HepG2 (cell line): ENCODE measurements at regions of chr15 and their contacts with region 1.

Region 1: DNA sequence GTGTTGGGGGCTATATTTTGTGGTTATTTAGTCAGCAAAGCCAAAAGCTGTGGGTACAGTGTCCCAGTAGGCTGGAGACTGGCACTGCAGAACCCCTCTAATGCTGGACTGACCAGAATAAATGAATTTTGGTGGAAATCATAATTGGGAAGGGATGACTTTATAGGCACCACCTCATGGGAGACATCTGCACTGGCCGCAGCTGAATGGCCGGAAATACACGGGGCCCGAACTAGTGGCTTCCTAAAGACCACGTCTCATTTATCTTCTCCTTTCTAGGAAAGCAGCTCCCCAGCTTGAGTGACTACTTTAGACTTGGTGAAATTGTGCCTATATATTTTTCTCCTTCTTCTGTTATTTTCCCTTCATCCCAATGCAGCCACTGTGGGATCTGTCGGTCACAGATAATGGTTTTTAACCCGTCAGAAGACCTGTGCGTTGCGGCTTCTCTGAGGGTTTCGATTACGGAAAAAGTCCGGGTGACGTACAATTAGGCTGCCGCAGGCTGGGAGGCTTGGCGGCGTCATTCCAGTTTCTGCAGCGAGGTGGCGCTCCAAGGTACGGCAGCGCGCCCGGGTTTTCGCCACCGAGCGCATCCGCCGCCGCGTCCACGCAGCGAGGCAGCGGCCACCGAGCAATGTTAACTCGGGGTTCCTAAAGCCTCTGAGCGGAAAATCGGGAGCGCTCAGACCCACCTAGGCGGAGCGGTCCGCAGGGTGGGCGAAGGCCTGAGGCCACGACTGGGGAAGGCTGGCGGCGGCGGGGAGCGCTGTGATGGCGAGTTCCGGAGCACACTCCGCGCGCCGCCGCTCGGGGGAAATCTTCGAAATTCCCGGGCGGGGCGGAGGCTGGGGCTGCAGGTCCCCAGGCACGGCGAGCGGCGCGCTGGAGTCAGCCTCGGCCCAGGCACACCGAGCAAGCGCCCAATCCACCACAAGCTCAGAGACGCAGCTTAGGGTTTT is 26.3 kb downstream of the NR2F2 start:
- DNase-seq: peak; percentile 54
- ATAC-seq: peak; percentile 78
- H3K4me3 ChIP-seq: peak overlapping the region; percentile 63 to 80 (median 70)
- H3K27ac ChIP-seq: no peak overlapping the region
- H3K4me1 ChIP-seq: peaks cover 26% of the 10 kb centered on the region
- H3K27me3 ChIP-seq: no peaks in the 10 kb centered on the region; a peak in 1 of 5 replicates
- CTCF ChIP-seq: peak; percentile 96
- EP300 ChIP-seq: no peak
- POLR2A ChIP-seq: no peak
- RAD21 ChIP-seq: peak; percentile 92

Region 2: DNA sequence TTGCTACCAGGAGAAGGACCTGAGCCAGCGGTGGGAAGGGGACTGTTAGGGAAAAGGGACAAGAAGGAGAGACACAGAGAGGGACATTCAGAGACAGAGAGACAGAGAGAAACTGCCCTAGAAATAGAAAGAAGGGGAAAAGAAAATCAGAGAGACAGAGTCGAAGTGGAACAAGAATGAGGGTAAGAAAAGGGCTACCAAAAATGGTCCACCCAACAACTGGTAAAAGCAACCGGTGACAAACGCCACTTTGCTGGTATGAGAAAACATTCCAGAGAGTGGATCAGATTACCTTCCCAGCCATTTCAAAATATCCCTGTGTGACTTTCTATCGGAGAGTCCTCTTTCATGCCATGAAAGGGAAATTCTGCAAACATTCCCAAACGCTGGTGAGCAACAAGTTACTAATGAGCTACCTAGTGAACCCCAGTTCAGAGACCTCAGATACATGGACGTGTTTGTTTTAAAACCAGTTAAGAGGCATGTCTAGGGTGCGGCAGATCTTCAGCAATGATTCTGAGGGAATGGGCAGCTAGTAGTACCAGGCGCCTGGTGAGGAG is 444.6 kb before region 1 on chr15:
- CTCF ChIA-PET with region 1: no interaction called
- POLR2A ChIA-PET with region 1: no interaction called
- in situ Hi-C with region 1: no loop called
- intact Hi-C with region 1: loop called (anchors 10 kb)
- DNase-seq: peak; percentile 66
- ATAC-seq: peak; percentile 87
- H3K4me3 ChIP-seq: no peak overlapping the region
- H3K27ac ChIP-seq: no peak overlapping the region
- H3K4me1 ChIP-seq: peaks cover 13% of the 10 kb centered on the region
- H3K27me3 ChIP-seq: no peaks in the 10 kb centered on the region
- CTCF ChIP-seq: no peak
- EP300 ChIP-seq: no peak
- POLR2A ChIP-seq: no peak
- RAD21 ChIP-seq: no peak

Region 3: DNA sequence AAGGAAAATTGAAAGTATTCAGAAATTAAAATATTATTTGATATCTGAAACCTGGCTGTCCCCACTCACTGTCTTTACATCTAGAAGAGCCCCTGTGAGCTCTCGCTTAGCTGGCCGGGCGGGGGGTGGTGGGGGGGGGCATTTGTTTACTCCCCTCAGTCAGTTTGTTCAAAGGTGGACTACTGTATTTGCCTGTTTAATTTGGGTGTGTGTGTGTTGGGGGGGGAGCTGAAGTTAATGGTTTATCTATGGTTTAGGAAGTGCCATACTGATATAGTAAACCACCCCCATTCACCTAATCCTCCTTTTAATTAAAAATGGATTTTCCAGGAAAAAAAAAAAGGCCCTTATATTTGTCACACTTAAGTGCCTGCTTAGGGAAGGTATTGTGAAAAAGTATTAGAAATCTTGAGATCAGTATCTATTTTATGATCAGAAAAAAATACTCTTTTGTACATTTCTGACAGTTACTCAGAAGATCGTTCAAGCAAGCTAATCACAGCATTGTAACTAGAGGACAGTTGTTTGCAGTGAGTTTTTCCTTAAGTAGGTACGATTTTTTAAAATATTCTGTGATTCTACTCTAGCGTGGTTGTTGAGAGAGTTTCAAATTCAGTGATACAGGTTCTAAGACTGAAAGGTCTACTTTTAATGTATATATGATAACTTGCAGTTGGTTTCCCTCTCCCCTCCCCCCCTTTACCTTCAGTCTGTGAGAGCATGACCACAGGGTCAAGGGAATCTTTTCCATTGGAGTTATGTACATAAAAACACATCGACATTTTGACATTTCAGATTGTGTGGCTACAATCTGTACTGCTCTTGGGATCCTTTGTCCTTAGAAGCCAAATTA is 17.8 kb before region 1 on chr15:
- CTCF ChIA-PET with region 1: no interaction called
- POLR2A ChIA-PET with region 1: interaction called, 8 read pairs
- in situ Hi-C with region 1: no loop called
- intact Hi-C with region 1: loop called (anchors 2 kb)
- DNase-seq: peak; percentile 89
- ATAC-seq: peak; percentile 65
- H3K4me3 ChIP-seq: peak overlapping the region; percentile 27 to 94 (median 82); a peak in 5 of 6 replicates
- H3K27ac ChIP-seq: peak overlapping the region; percentile 82
- H3K4me1 ChIP-seq: peaks cover 51% of the 10 kb centered on the region
- H3K27me3 ChIP-seq: no peaks in the 10 kb centered on the region
- CTCF ChIP-seq: no peak
- EP300 ChIP-seq: peak in 1 of 2 experiments; percentile 75; a peak in 2 of 4 replicates
- POLR2A ChIP-seq: no peak
- RAD21 ChIP-seq: no peak

Region 4: GRCh38 chr15:97759363-97759762 is 1402.6 kb after region 1 on chr15:
- CTCF ChIA-PET with region 1: no interaction called
- POLR2A ChIA-PET with region 1: no interaction called
- in situ Hi-C with region 1: loop called (anchors 25 kb)
- intact Hi-C with region 1: no loop called
- DNase-seq: no peak
- ATAC-seq: no peak
- H3K4me3 ChIP-seq: no peak overlapping the region
- H3K27ac ChIP-seq: no peak overlapping the region
- H3K4me1 ChIP-seq: no peaks in the 10 kb centered on the region
- H3K27me3 ChIP-seq: no peaks in the 10 kb centered on the region; a peak in 1 of 5 replicates
- CTCF ChIP-seq: no peak
- EP300 ChIP-seq: no peak
- POLR2A ChIP-seq: no peak
- RAD21 ChIP-seq: no peak